Activated T-helper 1 cell treated with anti-CD3 and anti-CD28 coated beads, Interleukin-12 subunit alpha, Interleukin-12 subunit beta, Interleukin-2, Interleukin-4 antibody, amounts not matched to agents 30 ng/mL and 10 ng/mL and 1 ng/mL, durations not matched to agents 14 hours and 24 hours and 36 hours (primary cell): ENCODE measurements at regions of chr7 and their contacts with region 1.

Region 1: DNA sequence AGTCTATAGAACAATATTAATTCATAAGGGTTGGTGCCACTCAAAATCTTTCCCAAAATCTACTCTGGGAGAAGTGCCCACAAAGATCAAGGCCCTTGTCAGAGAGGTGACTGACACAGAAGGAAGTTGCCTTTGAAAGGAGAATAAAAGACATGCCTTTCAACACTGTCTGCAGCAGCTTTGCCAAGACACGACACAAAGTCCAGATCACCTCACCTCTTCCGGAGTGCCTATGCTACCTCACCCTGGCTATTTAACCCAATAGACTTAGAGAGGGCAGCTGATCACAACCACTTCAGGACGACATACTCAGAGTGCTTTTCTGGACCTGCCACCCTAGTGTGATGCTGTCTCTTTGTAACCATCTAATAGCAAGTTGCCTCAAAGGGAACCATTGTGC is 49.0 kb upstream of the YAE1 start:
- DNase-seq: no peak
- H3K4me3 Mint-ChIP-seq: no peak overlapping the region
- H3K27ac Mint-ChIP-seq: no peak overlapping the region
- H3K4me1 Mint-ChIP-seq: no peaks in the 10 kb centered on the region
- H3K27me3 Mint-ChIP-seq: peaks cover 17% of the 10 kb centered on the region

Region 2: GRCh38 chr7:38796626-38797501 is 720.4 kb before region 1 on chr7:
- intact Hi-C with region 1: loop called (anchors 1 kb)
- DNase-seq: peak; percentile 17
- H3K4me3 Mint-ChIP-seq: no peak overlapping the region
- H3K27ac Mint-ChIP-seq: no peak overlapping the region
- H3K4me1 Mint-ChIP-seq: no peaks in the 10 kb centered on the region
- H3K27me3 Mint-ChIP-seq: no peaks in the 10 kb centered on the region

Region 3: DNA sequence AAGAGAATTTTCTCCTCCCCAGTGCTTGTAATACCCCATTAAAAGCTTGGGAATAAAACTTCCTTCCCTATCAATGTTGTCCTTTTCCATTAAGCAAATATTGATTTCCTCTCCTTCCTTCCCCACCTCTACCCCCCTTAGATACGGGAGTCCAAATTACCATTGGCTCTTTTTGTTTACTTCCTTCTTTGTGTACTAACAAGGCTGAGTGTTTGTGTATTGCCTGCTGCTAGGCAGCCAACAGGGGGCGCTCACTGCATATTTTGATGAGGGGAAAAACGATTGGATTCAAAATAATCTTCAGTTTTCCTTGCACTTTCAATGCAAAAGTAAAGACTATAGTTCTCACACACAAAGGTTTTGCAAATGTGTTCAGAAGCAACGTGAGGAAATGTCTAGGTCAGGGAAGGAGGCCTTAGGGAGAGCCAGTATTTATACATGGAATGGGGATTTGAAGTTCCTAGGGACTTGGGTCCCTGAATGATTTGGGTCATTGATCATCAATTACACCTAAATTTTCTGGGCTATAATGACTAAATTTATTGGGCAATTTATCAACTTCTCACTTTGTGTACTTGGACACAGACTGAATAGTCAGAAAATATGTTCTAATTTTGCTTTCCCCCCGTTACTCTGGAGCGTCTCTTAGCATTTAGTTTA is 584.6 kb before region 1 on chr7:
- intact Hi-C with region 1: loop called (anchors 1 kb)
- DNase-seq: peak; percentile 15
- H3K4me3 Mint-ChIP-seq: no peak overlapping the region
- H3K27ac Mint-ChIP-seq: no peak overlapping the region
- H3K4me1 Mint-ChIP-seq: peaks cover 7% of the 10 kb centered on the region
- H3K27me3 Mint-ChIP-seq: peaks cover 7% of the 10 kb centered on the region

Region 4: GRCh38 chr7:39228946-39229345 is 288.3 kb before region 1 on chr7:
- intact Hi-C with region 1: no loop called
- DNase-seq: no peak
- H3K4me3 Mint-ChIP-seq: no peak overlapping the region
- H3K27ac Mint-ChIP-seq: no peak overlapping the region
- H3K4me1 Mint-ChIP-seq: no peaks in the 10 kb centered on the region
- H3K27me3 Mint-ChIP-seq: no peaks in the 10 kb centered on the region

Region 5: DNA sequence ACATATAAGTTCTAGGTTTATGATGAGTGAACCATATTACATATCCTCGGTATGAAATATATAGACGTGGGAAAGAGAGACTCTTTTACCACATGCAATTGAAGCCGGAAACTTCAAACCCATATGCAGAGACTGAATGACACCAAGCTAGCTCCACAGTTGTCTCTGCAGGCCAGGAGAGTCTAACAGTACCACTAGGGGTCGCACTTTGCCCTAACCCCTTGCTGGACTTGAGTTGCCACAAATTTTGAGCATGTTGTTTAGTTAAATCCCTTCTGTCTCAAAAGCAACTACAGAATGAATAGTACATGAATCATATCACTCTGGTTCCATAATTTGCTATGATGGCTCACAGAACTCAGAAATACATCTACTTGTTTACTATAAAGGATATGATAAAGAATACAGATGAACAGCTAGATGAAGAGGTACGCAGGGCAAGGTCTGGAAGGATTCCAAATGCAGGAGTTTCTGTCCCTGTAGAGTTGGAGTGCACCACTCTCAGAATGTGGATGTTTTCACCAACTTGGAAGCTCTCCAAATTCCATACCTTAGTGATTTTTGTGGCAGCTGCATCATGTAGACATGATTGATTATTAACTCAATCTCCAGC is 63.4 kb before region 1 on chr7:
- intact Hi-C with region 1: loop called (anchors 1 kb)
- DNase-seq: peak; percentile 26
- H3K4me3 Mint-ChIP-seq: no peak overlapping the region
- H3K27ac Mint-ChIP-seq: no peak overlapping the region
- H3K4me1 Mint-ChIP-seq: no peaks in the 10 kb centered on the region
- H3K27me3 Mint-ChIP-seq: peaks cover 14% of the 10 kb centered on the region

Region 6: GRCh38 chr7:39465055-39465929 is 51.9 kb before region 1 on chr7:
- intact Hi-C with region 1: loop called (anchors 5 kb)
- DNase-seq: peak; percentile 8
- H3K4me3 Mint-ChIP-seq: no peak overlapping the region
- H3K27ac Mint-ChIP-seq: no peak overlapping the region
- H3K4me1 Mint-ChIP-seq: peaks cover 18% of the 10 kb centered on the region
- H3K27me3 Mint-ChIP-seq: peaks cover 20% of the 10 kb centered on the region

Region 7: DNA sequence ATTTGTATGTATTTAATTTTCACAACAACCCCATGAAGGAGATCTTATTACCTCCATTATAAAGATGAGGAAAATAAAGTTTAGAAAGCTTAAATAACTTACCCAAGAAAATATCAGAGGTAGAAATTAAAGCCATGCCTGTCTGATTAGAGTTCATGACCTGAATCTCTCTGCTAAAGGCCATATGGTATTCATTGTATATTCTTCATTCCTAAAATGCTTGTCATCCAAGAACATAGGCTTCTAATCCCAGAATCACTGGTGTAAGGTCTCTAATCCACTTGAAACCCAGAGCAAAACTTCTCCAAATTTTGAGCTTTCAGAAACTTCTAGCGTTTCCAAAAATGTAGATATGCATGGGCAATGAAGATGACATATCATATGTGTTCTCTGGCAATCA is 23.3 kb before region 1 on chr7:
- intact Hi-C with region 1: no loop called
- DNase-seq: no peak
- H3K4me3 Mint-ChIP-seq: no peak overlapping the region
- H3K27ac Mint-ChIP-seq: no peak overlapping the region
- H3K4me1 Mint-ChIP-seq: no peaks in the 10 kb centered on the region
- H3K27me3 Mint-ChIP-seq: peaks cover 28% of the 10 kb centered on the region

Region 8: DNA sequence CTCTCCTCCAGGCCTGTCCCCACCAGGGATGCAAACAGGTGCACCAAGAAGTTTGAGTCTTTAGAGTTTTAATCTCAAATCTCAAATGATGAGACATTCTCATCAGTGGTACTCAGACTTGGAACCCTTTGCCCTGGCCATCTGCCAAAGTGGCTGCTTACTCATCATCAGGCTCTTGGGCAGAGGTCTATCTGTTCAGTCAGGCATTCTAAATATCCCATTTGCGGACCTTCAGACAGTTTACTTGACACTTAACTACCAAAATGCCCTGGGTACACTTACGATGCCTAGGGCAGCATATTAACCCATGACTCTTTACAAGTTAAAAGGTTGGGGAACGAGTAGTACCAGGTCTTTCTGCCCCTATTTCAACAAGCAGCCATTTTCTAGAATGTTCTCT is 12.3 kb before region 1 on chr7:
- intact Hi-C with region 1: no loop called
- DNase-seq: no peak
- H3K4me3 Mint-ChIP-seq: no peak overlapping the region
- H3K27ac Mint-ChIP-seq: no peak overlapping the region
- H3K4me1 Mint-ChIP-seq: peaks cover 8% of the 10 kb centered on the region
- H3K27me3 Mint-ChIP-seq: peaks cover 8% of the 10 kb centered on the region